GM10248 (cell line): ENCODE measurements at regions of chr11 and their contacts with region 1.

Region 1: GRCh38 chr11:40293655-40294348 is 1165.7 kb downstream of the LRRC4C start:
- DNase-seq: peak; percentile 76
- CTCF ChIP-seq: peak; percentile 76

Region 2: GRCh38 chr11:40306938-40307548 is 13.2 kb after region 1 on chr11:
- CTCF ChIA-PET with region 1: interaction called, 24 read pairs
- POLR2A ChIA-PET with region 1: no interaction called
- DNase-seq: peak; percentile 34
- CTCF ChIP-seq: peak; percentile 43